Ascending aorta (tissue), 2 donors: ENCODE measurements at regions of chr6 and their contacts with region 1.

Region 1: DNA sequence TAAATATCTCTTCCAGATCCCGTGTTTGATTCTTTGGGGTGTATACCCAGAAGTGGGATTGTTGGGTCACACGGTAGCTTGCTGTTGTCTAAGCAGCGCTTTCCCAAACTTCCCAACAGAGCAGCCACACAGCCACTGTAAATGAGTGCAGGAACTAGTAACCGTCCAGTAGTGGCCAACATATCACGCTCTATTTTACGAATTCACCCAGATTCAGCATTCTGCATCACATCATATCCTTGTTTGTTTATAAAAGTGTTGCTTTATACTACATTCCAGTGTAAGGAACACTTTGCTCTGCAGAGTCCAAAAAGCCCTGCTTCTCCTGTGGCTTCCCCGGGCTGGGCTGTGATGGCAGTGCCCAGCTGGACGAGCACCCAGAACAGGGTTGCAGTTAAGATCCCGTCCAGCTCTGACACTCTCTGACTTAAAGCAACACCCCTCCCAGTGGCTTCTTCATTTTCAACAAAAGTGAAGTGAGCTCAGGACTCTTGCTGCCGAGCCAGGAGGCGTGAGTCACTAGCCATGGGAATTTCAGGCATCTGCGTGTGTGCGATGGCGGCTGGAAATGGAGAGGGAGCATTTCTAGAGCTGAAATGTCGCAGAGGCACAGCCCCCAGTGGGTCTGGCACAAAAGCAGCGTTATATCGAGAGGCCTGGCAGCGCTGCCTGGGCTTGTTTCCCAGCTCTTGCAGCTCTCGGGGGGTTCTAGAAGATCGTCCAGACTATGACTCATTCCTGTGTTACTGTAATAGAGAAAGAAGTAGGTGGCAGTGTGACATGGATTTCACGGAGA is 216.3 kb upstream of the ECI2 start:
- DNase-seq: peak; percentile 26 to 90
- H3K4me3 ChIP-seq: peak overlapping the region; percentile 27 to 35
- H3K27ac ChIP-seq: peak overlapping the region; percentile 45 to 58
- H3K4me1 ChIP-seq: peaks cover 6 to 8% of the 10 kb centered on the region in 2 donors
- H3K27me3 ChIP-seq: no peaks in the 10 kb centered on the region
- CTCF ChIP-seq: no peak

Region 2: DNA sequence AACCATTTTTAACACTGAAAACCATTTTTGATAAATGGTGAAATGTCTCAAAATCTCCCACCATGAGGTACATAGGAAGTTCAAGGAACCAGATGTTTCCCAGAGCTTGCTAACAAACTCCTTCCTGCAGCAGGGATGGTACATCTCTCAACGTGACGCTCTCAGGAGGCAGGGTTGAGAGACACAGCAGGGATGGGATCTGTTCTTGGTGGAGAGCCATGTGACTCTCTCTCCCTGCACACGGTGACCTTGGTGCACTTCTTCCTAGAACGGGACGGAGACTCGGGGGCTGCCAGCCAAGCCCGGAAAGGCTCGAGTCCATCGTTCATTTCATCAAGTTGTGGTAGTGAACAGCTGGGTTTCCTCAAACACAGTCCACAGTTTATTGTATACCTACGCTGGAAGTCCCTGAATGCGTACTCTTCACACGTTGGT is 408.4 kb before region 1 on chr6:
- intact Hi-C with region 1: no loop called
- DNase-seq: no peak
- H3K4me3 ChIP-seq: no peak overlapping the region
- H3K27ac ChIP-seq: no peak overlapping the region
- H3K4me1 ChIP-seq: no peaks in the 10 kb centered on the region
- H3K27me3 ChIP-seq: no peaks in the 10 kb centered on the region
- CTCF ChIP-seq: no peak

Region 3: DNA sequence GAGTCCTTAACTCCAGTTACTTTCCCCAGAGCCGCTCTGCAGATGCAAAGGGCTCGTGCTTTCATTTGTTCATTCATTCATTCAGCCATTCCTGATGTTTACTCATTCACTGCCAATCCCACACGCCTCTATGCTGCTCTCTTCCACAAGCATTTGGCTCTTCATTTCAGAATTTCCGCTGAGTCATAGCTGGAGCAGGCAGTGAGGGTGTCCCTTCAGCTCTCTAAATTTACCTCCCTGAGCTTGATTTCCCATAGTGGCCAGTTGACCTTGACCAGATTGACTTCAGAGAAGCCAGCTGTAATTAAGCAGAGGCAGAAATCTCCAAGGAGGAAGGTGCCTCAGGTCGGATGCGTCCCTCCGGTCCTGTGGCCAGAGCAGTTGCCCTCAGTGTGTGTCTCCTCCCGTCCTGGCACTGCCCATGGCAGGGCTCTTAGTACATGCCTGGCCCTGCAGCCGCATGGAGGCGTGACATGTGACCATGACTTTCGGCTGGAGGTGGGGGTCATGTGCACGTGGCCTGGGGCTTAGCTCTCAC is 50.8 kb after region 1 on chr6:
- intact Hi-C with region 1: loop called (anchors 2 kb)
- DNase-seq: no peak
- H3K4me3 ChIP-seq: peak overlapping the region in 1 of 2 donors; percentile 6
- H3K27ac ChIP-seq: peak overlapping the region; percentile 37 to 46
- H3K4me1 ChIP-seq: peaks cover 0 to 11% of the 10 kb centered on the region in 2 donors
- H3K27me3 ChIP-seq: no peaks in the 10 kb centered on the region
- CTCF ChIP-seq: no peak

Region 4: DNA sequence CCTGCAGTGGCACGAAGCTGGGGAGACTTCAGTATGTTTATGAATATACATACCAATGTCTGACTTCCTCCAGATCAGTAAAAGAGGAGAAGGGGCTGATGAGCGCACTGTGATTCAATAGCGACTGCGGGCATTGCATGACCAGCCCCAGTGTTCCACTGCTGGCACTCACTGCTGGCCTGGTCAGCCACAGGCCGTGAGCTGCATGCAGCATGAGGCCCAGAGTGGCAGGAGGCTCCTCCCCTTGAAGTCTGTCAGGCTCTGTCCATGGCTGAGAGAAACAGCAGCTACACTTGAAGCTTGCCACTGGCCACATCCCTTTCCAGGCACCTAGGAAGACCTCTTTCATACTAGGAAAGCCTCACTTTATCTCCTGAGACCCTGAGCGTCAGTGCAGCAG is 158.6 kb after region 1 on chr6:
- intact Hi-C with region 1: no loop called
- DNase-seq: no peak
- H3K4me3 ChIP-seq: no peak overlapping the region
- H3K27ac ChIP-seq: no peak overlapping the region
- H3K4me1 ChIP-seq: no peaks in the 10 kb centered on the region
- H3K27me3 ChIP-seq: no peaks in the 10 kb centered on the region
- CTCF ChIP-seq: no peak

Region 5: DNA sequence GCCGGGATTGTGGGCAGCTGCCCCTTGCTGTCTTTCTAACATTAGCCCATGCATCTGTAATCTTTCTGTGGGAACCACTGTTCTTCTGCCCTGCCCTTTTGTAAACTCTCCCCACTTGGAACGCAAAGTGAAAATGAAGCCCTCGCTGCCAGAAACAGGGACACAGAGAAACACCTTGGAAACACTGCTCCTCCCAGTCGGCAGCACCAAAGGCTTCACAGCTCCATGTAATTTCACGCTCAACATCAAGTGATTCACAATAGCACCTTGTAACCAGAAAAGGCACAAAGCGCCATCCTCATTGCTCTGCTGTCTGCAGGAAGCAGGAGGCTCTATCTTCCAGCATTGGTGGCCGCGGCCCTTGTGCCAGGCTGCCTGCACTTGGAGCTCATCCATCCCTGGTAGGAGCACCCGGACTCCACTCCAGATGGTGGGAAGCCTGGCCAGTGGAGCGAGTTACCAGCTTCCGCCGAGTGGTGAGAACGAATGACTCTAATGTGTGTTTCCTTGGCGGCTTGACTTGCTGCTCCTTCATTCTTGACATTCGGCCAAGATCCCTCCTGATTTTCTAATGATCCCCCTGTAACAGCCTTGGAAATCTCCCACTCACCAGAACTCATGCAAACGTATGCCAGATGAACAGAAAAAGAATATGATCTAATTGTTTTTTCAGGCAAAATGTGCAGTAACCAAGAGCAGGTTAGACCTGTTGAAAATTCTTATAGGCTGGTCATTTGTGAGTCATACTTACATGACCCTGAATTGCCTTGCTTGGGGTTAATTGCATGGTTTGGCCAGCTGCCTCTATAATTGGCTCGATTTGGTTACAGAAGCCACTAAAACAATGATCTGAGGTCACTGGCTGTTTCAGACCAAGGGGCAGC is 255.3 kb after region 1 on chr6:
- intact Hi-C with region 1: loop called (anchors 5 kb)
- DNase-seq: peak in 1 of 2 donors; percentile 72
- H3K4me3 ChIP-seq: peak overlapping the region; percentile 29
- H3K27ac ChIP-seq: peak overlapping the region; percentile 55 to 61
- H3K4me1 ChIP-seq: peaks cover 0 to 17% of the 10 kb centered on the region in 2 donors
- H3K27me3 ChIP-seq: no peaks in the 10 kb centered on the region
- CTCF ChIP-seq: no peak

Region 6: DNA sequence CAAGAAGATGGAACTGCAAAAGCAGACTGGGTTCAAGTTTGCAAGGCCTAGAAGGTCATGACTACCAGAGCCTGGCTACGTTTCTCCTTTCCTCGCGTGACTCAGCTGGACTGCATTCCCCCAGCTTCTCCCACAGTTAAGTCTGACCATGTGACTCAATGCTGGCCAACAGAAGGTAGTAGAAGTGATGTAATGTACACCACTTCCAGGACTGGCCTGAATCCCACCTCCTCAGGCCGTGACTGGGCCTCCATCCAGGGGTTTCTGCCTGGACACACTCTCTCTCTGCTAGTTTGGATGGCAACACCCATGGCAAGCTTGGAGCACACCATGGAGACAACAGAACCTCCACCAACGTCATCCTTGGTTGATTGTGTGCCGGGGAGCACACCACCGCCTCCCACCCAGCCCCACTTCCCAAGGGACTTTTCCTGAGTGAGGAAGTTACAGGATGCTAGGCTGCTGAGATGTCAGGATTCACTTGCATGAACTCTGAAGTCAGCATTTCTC is 312.5 kb after region 1 on chr6:
- intact Hi-C with region 1: loop called (anchors 5 kb)
- DNase-seq: peak; percentile 58 to 88
- H3K4me3 ChIP-seq: no peak overlapping the region
- H3K27ac ChIP-seq: peak overlapping the region; percentile 31 to 41
- H3K4me1 ChIP-seq: peaks cover 0 to 2% of the 10 kb centered on the region in 2 donors
- H3K27me3 ChIP-seq: no peaks in the 10 kb centered on the region
- CTCF ChIP-seq: no peak